BJ (cell line): ENCODE measurements at regions of chr18 and their contacts with region 1.

Region 1: DNA sequence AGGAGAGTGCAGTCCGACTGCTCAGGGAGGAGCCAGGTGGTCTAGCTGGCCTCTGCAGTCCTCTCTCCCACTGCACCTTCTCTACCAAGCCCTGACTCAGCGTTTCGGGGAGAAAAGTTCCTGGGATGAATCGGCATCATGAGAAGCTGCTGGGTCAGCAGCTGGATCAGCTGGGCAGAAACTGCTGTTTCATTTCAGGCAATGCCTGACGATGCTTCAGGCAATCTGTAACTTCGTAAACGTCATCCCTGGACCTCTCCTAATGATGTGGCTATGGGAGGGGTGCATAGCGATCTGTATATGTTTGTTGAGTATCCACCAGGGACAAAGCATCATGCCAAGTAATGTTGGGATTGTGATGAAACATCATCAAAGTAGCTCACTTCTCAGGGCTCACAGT is 20.7 kb downstream of the LIPG start:
- DNase-seq: no peak
- H3K4me3 ChIP-seq: no peak overlapping the region
- H3K27me3 ChIP-seq: peaks cover 10% of the 10 kb centered on the region
- CTCF ChIP-seq: no peak

Region 2: DNA sequence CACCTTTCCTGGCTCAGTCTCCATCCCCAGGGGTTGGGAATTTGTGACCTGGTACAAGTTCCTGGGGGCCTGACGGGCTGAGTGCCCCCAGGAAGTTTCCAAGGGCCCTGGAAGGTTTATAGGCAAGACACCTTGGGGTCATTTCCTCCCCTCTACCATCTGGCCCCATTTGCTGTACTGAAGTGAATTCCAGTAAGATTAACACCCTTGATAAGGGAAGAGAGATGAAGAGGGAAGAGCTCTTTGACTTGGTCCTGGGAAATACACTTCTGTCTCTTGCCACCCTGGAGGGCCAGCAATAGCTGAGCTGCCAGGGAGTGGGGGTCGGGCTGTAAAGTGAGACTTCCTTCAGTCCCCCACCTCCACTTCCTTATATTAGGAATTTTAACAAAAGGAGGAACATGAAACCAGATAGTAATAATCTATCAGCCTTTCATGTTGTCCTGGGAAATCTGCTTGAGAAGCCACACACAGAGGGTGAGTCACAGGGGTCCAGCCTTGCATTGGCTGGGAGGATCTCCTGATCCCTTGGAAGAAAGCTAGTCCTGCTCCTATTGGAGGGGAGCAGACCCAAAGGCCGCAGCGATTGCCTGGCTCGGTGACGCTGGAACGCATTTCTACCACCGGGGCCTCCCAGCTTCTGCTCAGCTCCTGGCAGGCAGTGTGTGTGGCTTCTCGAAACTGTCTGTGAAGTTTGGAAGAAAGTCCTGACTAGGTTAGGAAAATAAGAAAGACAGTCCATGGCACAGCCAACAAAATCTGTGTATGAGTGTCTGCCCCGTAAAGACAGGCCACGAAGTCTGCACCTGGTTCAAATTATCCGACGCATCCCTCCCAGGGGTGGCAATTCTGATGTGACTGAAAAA is 143.5 kb after region 1 on chr18:
- CTCF ChIA-PET with region 1: no interaction called
- POLR2A ChIA-PET with region 1: interaction called, 11 read pairs
- DNase-seq: peak; percentile 89
- H3K4me3 ChIP-seq: no peak overlapping the region
- H3K27me3 ChIP-seq: no peaks in the 10 kb centered on the region
- CTCF ChIP-seq: peak; percentile 46